ENCODE measurements at regions of chr14 and their contacts with region 1.

Region 1: GRCh38 chr14:61710853-61711817 is 15.8 kb downstream of the HIF1A start:
- DNase-seq: no peak
- ATAC-seq: peak in 1 of 4 experiments; percentile 41
- H3K4me3 ChIP-seq: no peak overlapping the region
- H3K4me3 Mint-ChIP-seq: peak overlapping the region; percentile 4 to 60 (median 55)
- H3K27ac ChIP-seq: no peak overlapping the region
- H3K27ac Mint-ChIP-seq: peak overlapping the region; percentile 19 to 28
- H3K4me1 ChIP-seq: peaks cover 23 to 51% of the 10 kb centered on the region in 2 experiments
- H3K4me1 Mint-ChIP-seq: peaks cover 87 to 91% (median 90%) of the 10 kb centered on the region in 3 donors
- H3K27me3 ChIP-seq: no peaks in the 10 kb centered on the region
- H3K27me3 Mint-ChIP-seq: no peaks in the 10 kb centered on the region

Region 2: DNA sequence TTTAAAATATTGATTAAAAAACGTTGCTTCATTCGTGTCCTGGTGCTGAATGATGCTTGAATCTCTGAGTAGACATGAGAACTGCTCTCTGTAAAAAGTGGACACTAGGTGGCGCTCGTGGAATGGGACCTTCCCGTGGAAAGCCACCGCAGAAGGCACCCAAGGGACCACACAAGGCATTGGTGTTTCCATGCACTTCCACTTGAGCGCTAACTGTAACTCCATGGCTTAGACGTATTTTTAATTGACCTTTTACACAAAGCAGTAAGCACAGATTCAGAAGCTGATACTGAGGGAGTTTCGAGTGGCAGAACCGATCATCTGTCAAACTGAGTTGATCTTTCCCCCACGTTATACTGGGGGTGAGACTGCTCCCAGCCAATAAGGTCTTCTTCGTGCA is 254.4 kb before region 1 on chr14:
- CTCF ChIA-PET with region 1: no interaction called
- POLR2A ChIA-PET with region 1: no interaction called
- DNase-seq: peak; percentile 56 to 93 (median 78)
- ATAC-seq: peak; percentile 18 to 38 (median 31)
- H3K4me3 ChIP-seq: no peak overlapping the region
- H3K4me3 Mint-ChIP-seq: peak overlapping the region in 1 of 3 donors; percentile 25
- H3K27ac ChIP-seq: peak overlapping the region; percentile 1
- H3K27ac Mint-ChIP-seq: peak overlapping the region; percentile 83 to 91
- H3K4me1 ChIP-seq: peaks cover 54 to 63% of the 10 kb centered on the region in 2 experiments
- H3K4me1 Mint-ChIP-seq: peaks cover 86 to 92% (median 86%) of the 10 kb centered on the region in 3 donors
- H3K27me3 ChIP-seq: no peaks in the 10 kb centered on the region
- H3K27me3 Mint-ChIP-seq: no peaks in the 10 kb centered on the region

Region 3: DNA sequence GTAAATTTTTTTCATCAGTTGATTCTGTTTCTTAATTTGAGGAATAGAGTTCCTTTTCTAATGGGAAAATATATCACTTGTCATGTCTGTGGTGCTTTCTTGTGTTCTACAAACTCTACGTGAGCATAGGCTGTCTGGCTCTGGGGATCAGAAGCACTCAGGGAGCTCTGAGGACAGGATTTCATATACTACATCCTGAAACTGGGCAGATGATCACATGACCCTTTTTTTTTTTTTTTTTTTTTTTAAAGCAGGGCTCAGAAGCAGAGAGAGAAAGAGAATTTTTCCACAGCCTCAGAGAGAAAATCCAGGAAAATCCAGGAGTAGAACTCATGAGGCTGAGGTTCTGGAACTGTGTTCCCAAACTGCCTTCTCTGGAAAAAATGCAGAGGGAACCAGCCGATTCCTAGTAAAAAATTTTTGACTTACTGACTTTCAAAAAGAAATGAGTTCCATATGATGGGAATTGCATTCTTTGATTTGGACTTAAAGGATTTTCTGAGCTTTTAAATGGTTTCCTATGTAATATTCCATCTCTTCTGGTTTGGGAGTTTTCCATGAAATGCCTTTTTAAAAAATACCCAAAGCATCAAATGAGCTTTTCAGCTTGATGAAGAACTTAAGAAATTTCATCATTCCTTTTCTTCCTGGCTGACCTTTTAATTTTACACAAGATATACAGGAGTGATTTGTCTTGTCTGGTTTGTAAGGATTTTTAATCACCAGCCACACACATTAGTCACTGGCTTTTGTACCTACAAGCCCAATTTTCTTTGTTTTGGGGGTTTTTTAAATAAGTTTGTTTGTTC is 198.9 kb before region 1 on chr14:
- CTCF ChIA-PET with region 1: interaction called in 1 of 2 experiments, 10 read pairs
- POLR2A ChIA-PET with region 1: no interaction called
- DNase-seq: no peak
- ATAC-seq: peak in 2 of 4 experiments; percentile 20 to 24
- H3K4me3 ChIP-seq: no peak overlapping the region
- H3K4me3 Mint-ChIP-seq: peak overlapping the region in 2 of 3 donors; percentile 8 to 12
- H3K27ac ChIP-seq: peak overlapping the region; percentile 36
- H3K27ac Mint-ChIP-seq: peak overlapping the region; percentile 67 to 83
- H3K4me1 ChIP-seq: peaks cover 53 to 58% of the 10 kb centered on the region in 2 experiments
- H3K4me1 Mint-ChIP-seq: peaks cover 76 to 92% (median 91%) of the 10 kb centered on the region in 3 donors
- H3K27me3 ChIP-seq: no peaks in the 10 kb centered on the region
- H3K27me3 Mint-ChIP-seq: no peaks in the 10 kb centered on the region

Region 4: DNA sequence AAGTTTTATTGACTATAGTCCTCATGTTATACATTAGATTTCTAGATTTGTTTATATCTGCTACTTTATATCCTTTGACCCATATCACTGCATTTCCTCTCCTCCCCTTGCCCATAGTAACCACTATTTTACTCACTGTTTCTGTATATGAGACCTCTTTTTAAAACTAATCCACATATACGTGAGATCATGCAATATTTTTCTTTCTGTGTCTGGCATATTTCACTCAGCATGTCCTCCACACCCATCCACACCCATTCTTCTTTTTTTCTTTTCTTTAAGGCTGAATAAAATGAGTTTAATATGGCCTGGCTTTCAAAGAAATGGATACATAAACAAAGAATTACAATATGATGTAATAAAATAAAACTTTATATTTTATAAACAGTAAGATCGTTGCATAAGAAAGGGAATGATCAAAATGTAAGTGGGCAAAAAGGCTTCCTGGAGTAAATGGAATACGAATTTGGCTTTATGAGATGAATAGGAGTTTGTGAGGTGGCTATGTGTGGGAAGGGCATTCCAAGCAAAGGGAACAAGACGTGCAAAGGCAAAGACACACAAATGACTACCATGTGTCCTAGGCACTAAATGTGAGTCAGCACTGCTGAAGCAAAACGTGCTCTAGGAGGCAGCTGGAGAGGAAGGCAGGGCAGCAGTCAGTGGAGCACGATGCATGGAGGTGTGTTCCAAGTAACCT is 69.1 kb before region 1 on chr14:
- CTCF ChIA-PET with region 1: no interaction called
- POLR2A ChIA-PET with region 1: no interaction called
- DNase-seq: no peak
- ATAC-seq: no peak
- H3K4me3 ChIP-seq: no peak overlapping the region
- H3K4me3 Mint-ChIP-seq: no peak overlapping the region
- H3K27ac ChIP-seq: no peak overlapping the region
- H3K27ac Mint-ChIP-seq: no peak overlapping the region
- H3K4me1 ChIP-seq: peaks cover 0 to 2% of the 10 kb centered on the region in 2 experiments
- H3K4me1 Mint-ChIP-seq: peaks cover 11 to 18% (median 12%) of the 10 kb centered on the region in 3 donors
- H3K27me3 ChIP-seq: no peaks in the 10 kb centered on the region
- H3K27me3 Mint-ChIP-seq: no peaks in the 10 kb centered on the region

Region 5: GRCh38 chr14:61681413-61681812 is 29.7 kb before region 1 on chr14:
- CTCF ChIA-PET with region 1: no interaction called
- POLR2A ChIA-PET with region 1: no interaction called
- DNase-seq: no peak
- ATAC-seq: no peak
- H3K4me3 ChIP-seq: no peak overlapping the region
- H3K4me3 Mint-ChIP-seq: no peak overlapping the region
- H3K27ac ChIP-seq: no peak overlapping the region
- H3K27ac Mint-ChIP-seq: no peak overlapping the region
- H3K4me1 ChIP-seq: peaks cover 0 to 4% of the 10 kb centered on the region in 2 experiments
- H3K4me1 Mint-ChIP-seq: peaks cover 0 to 17% (median 0%) of the 10 kb centered on the region in 3 donors
- H3K27me3 ChIP-seq: no peaks in the 10 kb centered on the region
- H3K27me3 Mint-ChIP-seq: peaks cover 0 to 2% of the 10 kb centered on the region in 2 donors

Region 6: DNA sequence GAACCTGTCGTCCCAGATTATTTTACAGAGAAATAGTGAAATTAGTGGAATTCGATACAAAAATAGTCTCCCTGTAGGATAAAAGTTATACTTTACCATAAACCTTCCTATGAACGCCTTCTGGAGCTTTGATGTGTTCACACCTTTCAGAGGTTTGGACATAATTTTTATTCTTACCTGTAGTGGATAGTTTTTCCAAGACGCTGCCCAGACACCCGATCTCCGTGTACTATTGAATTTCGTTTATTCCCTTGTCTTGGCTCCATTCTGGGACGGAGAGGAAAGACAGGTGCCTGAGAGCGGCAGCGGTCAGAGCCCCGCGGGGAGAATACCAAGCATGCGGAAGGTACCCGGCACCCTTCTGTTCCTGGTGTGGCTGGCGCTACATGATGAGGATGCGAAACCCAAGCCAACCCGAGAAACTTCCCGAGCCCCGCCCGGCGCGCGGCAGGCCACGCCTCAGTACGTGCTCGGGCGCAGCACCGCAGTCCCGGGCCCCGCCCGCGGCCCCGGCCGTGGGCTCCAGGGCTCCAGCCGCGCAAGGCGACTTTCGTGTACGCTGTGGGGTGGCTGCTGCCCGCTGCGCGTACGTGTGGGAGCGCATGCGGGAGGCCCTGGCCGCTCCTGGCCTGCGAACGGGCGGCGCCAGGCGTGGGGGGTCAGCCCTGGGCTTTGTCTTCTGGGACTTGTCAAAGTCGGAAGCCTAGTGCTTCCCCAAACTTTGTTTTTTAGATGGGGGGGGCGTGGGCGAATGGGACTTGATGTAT is 39.8 kb after region 1 on chr14:
- CTCF ChIA-PET with region 1: no interaction called
- POLR2A ChIA-PET with region 1: no interaction called
- DNase-seq: peak; percentile 39 to 87 (median 65)
- ATAC-seq: peak; percentile 90 to 99 (median 98)
- H3K4me3 ChIP-seq: peak overlapping the region; percentile 40 to 49
- H3K4me3 Mint-ChIP-seq: peak overlapping the region; percentile 81 to 85 (median 84)
- H3K27ac ChIP-seq: no peak overlapping the region
- H3K27ac Mint-ChIP-seq: peak overlapping the region; percentile 76
- H3K4me1 ChIP-seq: peaks cover 0 to 3% of the 10 kb centered on the region in 2 experiments
- H3K4me1 Mint-ChIP-seq: peaks cover 8 to 20% (median 11%) of the 10 kb centered on the region in 3 donors
- H3K27me3 ChIP-seq: no peaks in the 10 kb centered on the region
- H3K27me3 Mint-ChIP-seq: no peaks in the 10 kb centered on the region